Endothelial cell of umbilical vein (primary cell): ENCODE measurements at regions of chr17 and their contacts with region 1.

Region 1: GRCh38 chr17:38444151-38444550 is 15.9 kb downstream of the ARHGAP23 start:
- DNase-seq: peak; percentile 68
- H3K4me3 ChIP-seq: no peak overlapping the region
- H3K27ac ChIP-seq: no peak overlapping the region
- H3K4me1 ChIP-seq: peaks cover 28% of the 10 kb centered on the region
- H3K27me3 ChIP-seq: no peaks in the 10 kb centered on the region
- CTCF ChIP-seq: peak; percentile 97 to 99
- POLR2A ChIP-seq: no peak

Region 2: DNA sequence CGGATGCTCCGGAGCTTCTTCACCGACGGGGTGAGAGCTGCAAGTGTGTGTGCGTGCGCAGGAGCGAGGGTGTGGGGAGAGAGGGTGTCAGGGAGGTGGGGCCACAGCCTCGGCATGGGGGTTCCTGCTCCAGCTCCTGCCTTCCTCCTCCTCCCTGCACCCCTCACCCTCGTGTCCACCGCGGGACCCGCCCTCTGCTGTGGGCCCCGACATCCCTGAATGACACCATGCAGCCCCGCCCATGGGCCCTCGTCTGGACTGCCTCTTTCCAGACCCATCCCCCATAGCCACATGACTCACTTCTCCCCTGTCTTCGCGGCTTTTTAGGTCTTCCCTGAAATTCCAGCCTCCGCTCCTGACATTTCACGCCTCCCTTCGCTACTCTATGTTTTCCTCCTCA is 25.7 kb after region 1 on chr17:
- CTCF ChIA-PET with region 1: interaction called, 8 read pairs
- POLR2A ChIA-PET with region 1: no interaction called
- dilution Hi-C with region 1: no loop called
- intact Hi-C with region 1: loop called (anchors 1 kb)
- DNase-seq: peak; percentile 23
- H3K4me3 ChIP-seq: no peak overlapping the region
- H3K27ac ChIP-seq: peak overlapping the region; percentile 10
- H3K4me1 ChIP-seq: peaks cover 36% of the 10 kb centered on the region
- H3K27me3 ChIP-seq: no peaks in the 10 kb centered on the region
- CTCF ChIP-seq: no peak
- POLR2A ChIP-seq: peak; percentile 19

Region 3: DNA sequence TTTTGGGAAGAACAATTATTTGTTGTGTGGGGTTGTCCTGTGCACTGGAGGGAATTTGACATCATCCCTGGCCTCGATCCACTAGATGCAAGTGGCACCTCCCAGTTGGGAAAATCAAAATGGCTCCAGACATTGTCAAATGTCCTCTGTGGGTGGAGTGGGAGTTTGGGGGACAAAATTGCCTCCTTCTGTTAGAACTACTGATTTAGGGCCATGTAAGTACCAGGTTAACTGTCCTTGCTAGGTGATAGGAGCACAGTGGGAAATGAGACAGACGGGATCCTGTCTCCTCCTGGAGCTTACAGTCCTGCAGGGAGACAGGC is 41.0 kb after region 1 on chr17:
- CTCF ChIA-PET with region 1: interaction called, 8 read pairs
- POLR2A ChIA-PET with region 1: no interaction called
- dilution Hi-C with region 1: no loop called
- intact Hi-C with region 1: loop called (anchors 1 kb)
- DNase-seq: no peak
- H3K4me3 ChIP-seq: no peak overlapping the region
- H3K27ac ChIP-seq: no peak overlapping the region
- H3K4me1 ChIP-seq: peaks cover 2% of the 10 kb centered on the region
- H3K27me3 ChIP-seq: no peaks in the 10 kb centered on the region
- CTCF ChIP-seq: no peak
- POLR2A ChIP-seq: no peak